Activated naive CD4-positive, alpha-beta T cell treated with anti-CD3 and anti-CD28 coated beads, Interleukin-2, amount 10 ng/mL, durations not matched to agents 7 days and 5 days (primary cell): ENCODE measurements at regions of chr17 and their contacts with region 1.

Region 1: GRCh38 chr17:57440522-57441485 is 184.5 kb downstream of the MSI2 start:
- DNase-seq: peak; percentile 65
- H3K4me3 Mint-ChIP-seq: no peak overlapping the region
- H3K27ac Mint-ChIP-seq: peak overlapping the region; percentile 76
- H3K4me1 Mint-ChIP-seq: peaks cover 53% of the 10 kb centered on the region
- H3K27me3 Mint-ChIP-seq: no peaks in the 10 kb centered on the region

Region 2: DNA sequence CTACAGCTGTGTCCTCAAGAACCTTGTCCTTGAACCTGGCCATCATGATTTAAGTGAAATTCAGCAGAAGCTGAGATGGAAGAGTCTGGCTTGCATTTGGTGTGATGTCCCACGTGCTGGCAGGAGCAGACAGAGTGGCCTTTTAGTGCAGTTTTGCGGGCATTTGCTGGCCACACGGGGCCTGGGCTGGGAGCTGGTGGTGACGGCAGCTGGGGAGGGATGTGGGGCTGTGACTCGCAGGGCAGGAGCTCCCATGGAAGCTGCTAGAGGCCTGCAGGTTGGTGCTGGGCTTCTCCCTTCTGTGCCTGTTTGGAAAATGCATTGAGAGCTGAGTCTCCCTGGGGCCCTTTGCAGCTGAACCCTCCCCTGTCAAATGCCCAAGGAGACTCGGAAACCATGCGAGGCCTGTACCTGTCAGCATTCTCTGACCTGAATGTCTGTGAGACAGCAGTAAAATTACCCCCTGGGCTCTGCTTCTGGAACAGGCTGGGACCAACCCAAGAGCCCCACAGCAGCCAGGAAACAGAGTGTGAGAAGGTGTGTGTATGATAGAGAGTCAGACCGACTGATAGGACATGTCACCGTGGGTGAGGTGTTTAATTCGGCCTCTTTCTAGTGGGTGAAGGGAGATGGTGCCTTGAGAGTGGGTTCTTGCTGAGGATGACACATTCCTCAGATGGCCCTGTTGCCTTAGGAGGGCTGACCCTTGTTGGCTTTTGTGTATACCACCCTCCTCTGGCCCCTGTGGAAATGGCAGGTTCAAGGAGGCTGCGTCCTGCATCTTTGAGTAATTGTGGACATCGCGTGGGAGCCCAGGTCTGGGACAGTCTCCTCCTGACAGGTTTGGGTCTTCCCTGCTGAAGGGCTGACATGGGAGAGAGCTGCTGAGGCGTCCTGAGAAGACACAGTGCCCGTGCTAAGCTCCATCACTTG is 39.0 kb before region 1 on chr17:
- CTCF ChIA-PET with region 1: interaction called, 14 read pairs
- DNase-seq: no peak
- H3K4me3 Mint-ChIP-seq: no peak overlapping the region
- H3K27ac Mint-ChIP-seq: no peak overlapping the region
- H3K4me1 Mint-ChIP-seq: peaks cover 6% of the 10 kb centered on the region
- H3K27me3 Mint-ChIP-seq: no peaks in the 10 kb centered on the region

Region 3: GRCh38 chr17:57455063-57455914 is 14.5 kb after region 1 on chr17:
- CTCF ChIA-PET with region 1: interaction called, 25 read pairs
- DNase-seq: peak; percentile 32
- H3K4me3 Mint-ChIP-seq: no peak overlapping the region
- H3K27ac Mint-ChIP-seq: peak overlapping the region; percentile 82
- H3K4me1 Mint-ChIP-seq: peaks cover 51% of the 10 kb centered on the region
- H3K27me3 Mint-ChIP-seq: no peaks in the 10 kb centered on the region

Region 4: GRCh38 chr17:57697891-57698711 is 257.3 kb after region 1 on chr17:
- CTCF ChIA-PET with region 1: no interaction called
- DNase-seq: no peak
- H3K4me3 Mint-ChIP-seq: no peak overlapping the region
- H3K27ac Mint-ChIP-seq: no peak overlapping the region
- H3K4me1 Mint-ChIP-seq: peaks cover 10% of the 10 kb centered on the region
- H3K27me3 Mint-ChIP-seq: no peaks in the 10 kb centered on the region